HEK293 (cell line): ENCODE measurements at regions of chr7 and their contacts with region 1.

Region 1: DNA sequence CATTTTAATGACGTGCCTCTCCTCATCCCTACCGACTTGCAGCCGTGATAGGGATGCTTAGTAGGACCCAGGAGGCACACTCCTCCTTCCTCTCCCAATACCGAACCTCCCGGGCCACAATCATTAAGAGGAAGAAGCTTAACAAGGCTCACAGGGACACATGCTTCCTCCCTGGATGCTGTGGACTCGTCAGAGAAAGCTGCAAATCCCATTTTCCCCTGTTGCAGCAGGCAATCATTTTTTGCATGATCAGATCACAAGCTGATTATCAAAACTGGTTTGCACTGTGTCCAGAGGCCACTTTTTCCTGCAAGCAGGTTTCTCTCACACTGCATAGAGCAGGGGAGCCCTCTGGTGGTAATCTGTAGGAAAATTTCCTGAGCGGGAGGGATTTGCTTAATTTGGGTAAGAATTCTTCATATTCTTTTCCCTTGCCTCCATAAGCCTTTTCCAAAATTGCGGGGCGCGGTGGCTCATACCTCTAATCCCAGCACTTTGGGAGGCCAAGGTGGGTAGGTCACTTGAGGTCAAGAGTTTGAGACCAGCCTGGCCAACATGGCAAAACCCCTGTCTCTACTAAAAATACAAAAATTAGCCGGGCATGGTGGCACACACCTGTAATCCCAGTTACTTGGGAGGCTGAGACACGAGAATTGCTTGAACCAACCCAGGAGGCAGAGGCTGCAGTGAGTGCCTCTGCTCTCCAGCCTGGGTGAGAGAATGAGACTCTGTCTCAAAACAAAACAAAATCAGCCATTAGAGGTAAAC is 16.1 kb upstream of the LAMB4 start:
- H3K4me3 ChIP-seq: no peak overlapping the region
- H3K27ac ChIP-seq: no peak overlapping the region
- H3K4me1 ChIP-seq: no peaks in the 10 kb centered on the region
- CTCF ChIP-seq: peak; percentile 82

Region 2: DNA sequence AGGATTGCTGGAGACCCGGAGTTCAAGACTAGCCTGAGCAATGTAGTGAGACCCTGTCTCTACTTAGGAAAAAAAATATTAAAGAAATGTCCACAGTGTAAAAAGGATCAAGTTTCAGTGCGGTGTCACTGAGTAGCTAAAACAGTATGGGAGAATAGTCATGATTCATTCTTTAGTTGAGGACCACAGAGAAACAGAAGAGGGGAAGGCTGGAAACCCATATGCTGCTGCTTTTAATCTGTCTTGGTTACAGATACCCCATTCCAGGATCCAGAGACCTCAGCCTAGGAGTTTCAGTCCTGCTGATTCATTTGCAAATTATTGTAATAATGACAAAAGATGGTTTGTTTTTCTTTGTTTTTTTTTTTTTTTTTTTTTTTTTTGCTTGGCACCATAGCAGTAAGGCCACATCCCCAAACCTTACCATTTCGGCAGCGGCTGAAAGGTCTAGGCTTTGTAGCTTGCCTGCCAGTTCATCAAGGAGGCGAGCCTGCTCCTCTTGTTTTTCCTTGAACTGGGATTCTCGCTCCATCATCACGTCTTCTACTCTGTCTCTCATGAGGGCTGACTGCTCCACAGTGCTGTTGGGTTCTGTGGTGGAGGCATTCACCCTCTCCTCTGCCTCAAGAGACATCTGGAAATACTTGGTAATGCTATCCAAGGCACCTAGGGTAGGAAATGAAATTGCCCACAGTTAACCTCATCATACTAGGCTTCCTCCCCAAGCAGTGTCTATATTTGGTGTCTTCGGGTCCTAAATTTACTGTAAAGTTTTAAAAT is 211.1 kb before region 1 on chr7:
- CTCF ChIA-PET with region 1: interaction called, 11 read pairs
- POLR2A ChIA-PET with region 1: no interaction called
- H3K4me3 ChIP-seq: no peak overlapping the region
- H3K27ac ChIP-seq: no peak overlapping the region
- H3K4me1 ChIP-seq: no peaks in the 10 kb centered on the region
- CTCF ChIP-seq: no peak

Region 3: DNA sequence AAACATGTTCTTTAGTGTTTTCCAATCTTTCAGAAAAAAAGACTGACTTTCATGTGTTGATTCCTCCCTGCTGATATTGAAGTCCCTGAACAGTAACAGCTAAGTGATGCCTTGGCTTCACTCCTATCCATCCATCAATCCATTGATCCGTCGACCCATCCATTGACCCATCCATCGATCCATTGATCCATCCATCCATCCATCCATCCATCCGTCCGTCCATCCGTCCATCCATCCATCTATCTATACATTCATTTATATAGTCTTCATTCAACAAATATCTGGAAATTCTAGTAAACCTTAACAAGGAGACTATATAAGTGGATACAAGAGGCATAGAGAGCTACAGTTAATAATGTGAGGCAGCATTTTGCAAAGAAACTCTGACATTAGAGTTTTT is 121.7 kb before region 1 on chr7:
- CTCF ChIA-PET with region 1: no interaction called
- POLR2A ChIA-PET with region 1: no interaction called
- H3K4me3 ChIP-seq: no peak overlapping the region
- H3K27ac ChIP-seq: no peak overlapping the region
- H3K4me1 ChIP-seq: no peaks in the 10 kb centered on the region; the same call in 1 of the 2 replicates
- CTCF ChIP-seq: no peak

Region 4: DNA sequence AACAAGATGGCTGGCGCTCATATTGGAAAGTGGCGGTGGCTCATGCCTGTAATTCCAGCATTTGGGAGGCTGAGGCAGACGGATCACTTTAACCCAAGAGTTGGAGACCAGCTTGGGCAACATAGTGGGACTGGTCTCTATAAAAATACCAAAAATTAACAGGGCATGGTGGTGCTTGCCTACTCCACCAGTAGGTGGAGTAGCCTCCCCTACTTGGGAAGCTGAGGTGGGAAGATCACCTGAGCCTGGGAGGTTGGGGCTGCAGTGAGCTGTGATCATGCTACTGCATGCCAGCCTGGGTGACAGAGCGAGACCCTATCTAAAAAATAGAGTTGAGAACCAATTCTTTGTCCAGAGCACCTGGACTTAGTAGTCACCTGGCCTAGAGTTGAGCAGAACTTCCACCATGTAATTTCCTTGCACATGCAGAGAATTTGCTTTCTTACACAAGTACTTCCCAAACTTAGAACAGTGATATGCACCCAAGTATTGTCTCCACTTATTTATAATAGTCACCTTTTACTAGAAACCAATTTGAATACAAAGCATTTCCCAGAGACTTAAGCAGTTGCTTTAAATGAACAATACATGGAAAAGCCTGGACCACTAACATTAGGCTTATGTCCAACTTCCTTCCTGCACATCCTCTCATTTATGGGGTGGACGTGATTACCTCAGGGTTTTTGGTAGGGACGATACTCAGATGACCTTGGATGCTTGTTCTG is 32.0 kb before region 1 on chr7:
- CTCF ChIA-PET with region 1: interaction called, 29 read pairs
- POLR2A ChIA-PET with region 1: no interaction called
- H3K4me3 ChIP-seq: no peak overlapping the region
- H3K27ac ChIP-seq: no peak overlapping the region
- H3K4me1 ChIP-seq: no peaks in the 10 kb centered on the region
- CTCF ChIP-seq: no peak

Region 5: GRCh38 chr7:108132551-108133265 is 13.5 kb before region 1 on chr7:
- CTCF ChIA-PET with region 1: interaction called, 19 read pairs
- POLR2A ChIA-PET with region 1: no interaction called
- H3K4me3 ChIP-seq: no peak overlapping the region
- H3K27ac ChIP-seq: no peak overlapping the region
- H3K4me1 ChIP-seq: no peaks in the 10 kb centered on the region
- CTCF ChIP-seq: no peak

Region 6: GRCh38 chr7:108711611-108712010 is 565.4 kb after region 1 on chr7:
- CTCF ChIA-PET with region 1: no interaction called
- POLR2A ChIA-PET with region 1: no interaction called
- H3K4me3 ChIP-seq: no peak overlapping the region
- H3K27ac ChIP-seq: no peak overlapping the region
- H3K4me1 ChIP-seq: no peaks in the 10 kb centered on the region
- CTCF ChIP-seq: no peak